SK-N-SH (cell line): ENCODE measurements at regions of chr2 and their contacts with region 1.

Region 1: GRCh38 chr2:47323009-47323821 is 79.7 kb upstream of the MSH2 start:
- DNase-seq: peak; percentile 87
- H3K4me3 ChIP-seq: no peak overlapping the region; a peak in 1 of 4 replicates
- H3K27ac ChIP-seq: no peak overlapping the region
- H3K4me1 ChIP-seq: peaks cover 2 to 17% of the 10 kb centered on the region in 2 experiments; a peak in 1 of 4 replicates
- H3K27me3 ChIP-seq: no peaks in the 10 kb centered on the region
- CTCF ChIP-seq: peak; percentile 99
- EP300 ChIP-seq: no peak
- RAD21 ChIP-seq: peak; percentile 100

Region 2: GRCh38 chr2:46876741-46877384 is 446.4 kb before region 1 on chr2:
- CTCF ChIA-PET with region 1: interaction called, 10 read pairs
- POLR2A ChIA-PET with region 1: no interaction called
- DNase-seq: peak; percentile 73
- H3K4me3 ChIP-seq: no peak overlapping the region
- H3K27ac ChIP-seq: peak overlapping the region; percentile 7 to 76
- H3K4me1 ChIP-seq: peaks cover 35 to 38% of the 10 kb centered on the region in 2 experiments; a peak in 3 of 4 replicates
- H3K27me3 ChIP-seq: no peaks in the 10 kb centered on the region
- CTCF ChIP-seq: peak; percentile 80
- EP300 ChIP-seq: no peak
- RAD21 ChIP-seq: peak; percentile 91

Region 3: GRCh38 chr2:46915811-46916630 is 407.2 kb before region 1 on chr2:
- CTCF ChIA-PET with region 1: interaction called, 107 read pairs
- POLR2A ChIA-PET with region 1: interaction called, 5 read pairs
- DNase-seq: peak; percentile 100
- H3K4me3 ChIP-seq: peak overlapping the region; percentile 77 to 81
- H3K27ac ChIP-seq: peak overlapping the region; percentile 90 to 93
- H3K4me1 ChIP-seq: peaks cover 15 to 21% of the 10 kb centered on the region in 2 experiments; a peak in 3 of 4 replicates
- H3K27me3 ChIP-seq: no peaks in the 10 kb centered on the region
- CTCF ChIP-seq: no peak
- EP300 ChIP-seq: no peak
- RAD21 ChIP-seq: no peak

Region 4: GRCh38 chr2:47002480-47003381 is 320.5 kb before region 1 on chr2:
- CTCF ChIA-PET with region 1: interaction called, 36 read pairs
- POLR2A ChIA-PET with region 1: interaction called, 4 read pairs
- DNase-seq: peak; percentile 90
- H3K4me3 ChIP-seq: no peak overlapping the region
- H3K27ac ChIP-seq: peak overlapping the region; percentile 37 to 99; a peak in 3 of 4 replicates
- H3K4me1 ChIP-seq: peaks cover 9 to 87% of the 10 kb centered on the region in 2 experiments
- H3K27me3 ChIP-seq: no peaks in the 10 kb centered on the region
- CTCF ChIP-seq: no peak
- EP300 ChIP-seq: peak in 1 of 2 experiments; percentile 27; a peak in 1 of 4 replicates
- RAD21 ChIP-seq: no peak

Region 5: GRCh38 chr2:47043142-47043890 is 279.9 kb before region 1 on chr2:
- CTCF ChIA-PET with region 1: interaction called, 13 read pairs
- POLR2A ChIA-PET with region 1: no interaction called
- DNase-seq: peak; percentile 82
- H3K4me3 ChIP-seq: peak overlapping the region; percentile 37 to 43; a peak in 3 of 4 replicates
- H3K27ac ChIP-seq: peak overlapping the region; percentile 96 to 99
- H3K4me1 ChIP-seq: peaks cover 37 to 76% of the 10 kb centered on the region in 2 experiments
- H3K27me3 ChIP-seq: no peaks in the 10 kb centered on the region
- CTCF ChIP-seq: peak; percentile 20
- EP300 ChIP-seq: peak; percentile 67 to 95
- RAD21 ChIP-seq: peak; percentile 48

Region 6: GRCh38 chr2:47195149-47195548 is 128.1 kb before region 1 on chr2:
- CTCF ChIA-PET with region 1: interaction called, 16 read pairs
- POLR2A ChIA-PET with region 1: interaction called, 3 read pairs
- DNase-seq: no peak
- H3K4me3 ChIP-seq: no peak overlapping the region
- H3K27ac ChIP-seq: no peak overlapping the region
- H3K4me1 ChIP-seq: peaks cover 49 to 52% of the 10 kb centered on the region in 2 experiments
- H3K27me3 ChIP-seq: no peaks in the 10 kb centered on the region
- CTCF ChIP-seq: peak; percentile 27; the same call in 1 of the 2 replicates
- EP300 ChIP-seq: no peak
- RAD21 ChIP-seq: peak; percentile 34

Region 7: DNA sequence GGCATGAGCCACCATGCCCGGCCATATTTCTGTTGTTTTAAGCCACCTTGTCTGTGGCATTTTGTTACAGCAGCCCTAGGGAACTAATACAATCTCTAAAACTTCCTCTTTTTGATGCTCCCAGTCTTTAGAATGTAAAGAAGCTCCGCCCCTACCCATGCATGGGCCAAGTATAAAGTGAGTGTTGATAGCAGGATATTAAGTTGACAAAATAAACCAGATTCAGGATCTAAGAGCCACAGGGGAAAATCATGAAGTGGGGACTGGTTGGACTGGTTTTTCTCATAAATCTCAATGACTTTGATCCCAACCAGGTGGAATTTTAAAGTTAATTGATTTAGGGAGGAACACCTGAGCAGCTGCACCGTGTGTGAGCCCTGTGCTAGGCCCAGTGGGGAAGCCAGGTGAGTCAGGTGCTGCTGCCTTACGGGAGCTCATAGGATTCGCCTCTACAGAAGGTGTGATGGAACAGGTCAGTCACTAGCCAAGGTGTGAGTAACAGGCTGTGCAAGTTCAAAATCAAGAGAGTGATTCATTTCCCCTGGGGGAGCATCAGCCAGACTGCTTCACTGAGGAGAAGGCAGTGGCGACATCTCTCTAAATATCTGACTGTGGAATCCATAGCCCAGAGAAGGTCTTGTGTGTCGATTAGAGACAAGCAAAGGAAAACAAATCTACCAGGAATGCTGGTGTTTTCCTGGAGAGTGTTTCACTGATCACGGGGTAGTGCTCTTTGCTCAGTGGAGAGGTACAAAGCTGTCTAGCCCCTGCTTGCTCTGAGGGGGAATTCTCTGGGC is 16.7 kb after region 1 on chr2:
- CTCF ChIA-PET with region 1: interaction called, 59 read pairs
- POLR2A ChIA-PET with region 1: interaction called, 5 read pairs
- DNase-seq: no peak
- H3K4me3 ChIP-seq: no peak overlapping the region
- H3K27ac ChIP-seq: no peak overlapping the region; a peak in 1 of 4 replicates
- H3K4me1 ChIP-seq: peaks cover 0 to 18% of the 10 kb centered on the region in 2 experiments; a peak in 2 of 4 replicates
- H3K27me3 ChIP-seq: no peaks in the 10 kb centered on the region
- CTCF ChIP-seq: no peak
- EP300 ChIP-seq: no peak
- RAD21 ChIP-seq: no peak